IMR-90 (cell line): ENCODE measurements at regions of chr5 and their contacts with region 1.

Region 1: GRCh38 chr5:74640450-74640953 is at the start of gene ENC1:
- DNase-seq: peak; percentile 84
- ATAC-seq: peak; percentile 77
- H3K4me3 ChIP-seq: peak within 1 kb of the TSS; percentile 95
- H3K27ac ChIP-seq: peak within 1 kb of the TSS; percentile 82
- H3K4me1 ChIP-seq: peaks cover 16% of the 10 kb centered on the region
- H3K27me3 ChIP-seq: no peaks in the 10 kb centered on the region
- CTCF ChIP-seq: peak; percentile 53
- POLR2A ChIP-seq: peak; percentile 75
- RAD21 ChIP-seq: peak; percentile 43; the same call in 1 of the 2 replicates
- total RNA-seq, gene ENC1: 55.8 and 70.8 TPM in 2 replicates

Region 2: DNA sequence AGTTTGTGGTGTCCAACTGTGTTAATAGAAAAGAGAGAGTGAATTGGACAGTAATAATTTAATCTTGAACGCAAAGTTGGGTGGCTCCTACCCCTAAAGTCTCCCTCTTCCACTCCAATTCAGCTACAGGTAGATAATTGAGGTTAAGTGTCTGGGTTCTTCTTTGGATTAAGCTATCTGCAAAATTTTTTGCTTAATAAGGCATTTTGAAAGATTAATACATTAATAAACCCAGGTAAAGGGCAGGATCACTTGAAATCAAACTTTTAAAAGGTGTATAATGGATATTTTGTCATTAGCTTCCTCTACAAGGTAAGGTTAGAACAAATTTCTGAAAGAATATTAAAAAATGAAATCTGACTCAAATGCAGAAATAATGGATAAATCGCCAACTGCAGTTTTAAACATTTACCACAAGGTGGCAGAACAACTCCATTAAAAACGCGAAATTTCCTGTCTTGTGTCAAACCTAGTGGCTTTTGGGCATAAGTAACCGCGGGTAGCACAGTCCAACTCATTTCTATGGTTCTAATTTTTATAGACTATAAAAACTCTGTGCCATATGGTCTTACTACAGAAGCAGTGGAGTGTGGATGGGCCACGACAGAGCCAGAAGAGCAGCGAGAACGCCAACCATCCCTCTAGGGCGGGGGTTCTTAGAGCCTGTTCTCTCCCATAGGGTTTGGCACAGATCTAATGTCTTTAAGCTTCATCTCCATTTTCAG is 738.0 kb before region 1 on chr5:
- CTCF ChIA-PET with region 1: interaction called, 12 read pairs
- POLR2A ChIA-PET with region 1: no interaction called
- dilution Hi-C with region 1: no loop called
- in situ Hi-C with region 1: loop called (anchors 5 kb)
- intact Hi-C with region 1: loop called (anchors 1 kb)
- DNase-seq: peak; percentile 77
- ATAC-seq: peak; percentile 63
- H3K4me3 ChIP-seq: no peak overlapping the region
- H3K27ac ChIP-seq: no peak overlapping the region
- H3K4me1 ChIP-seq: peaks cover 4% of the 10 kb centered on the region
- H3K27me3 ChIP-seq: no peaks in the 10 kb centered on the region
- CTCF ChIP-seq: peak; percentile 80
- POLR2A ChIP-seq: no peak
- RAD21 ChIP-seq: peak; percentile 81

Region 3: DNA sequence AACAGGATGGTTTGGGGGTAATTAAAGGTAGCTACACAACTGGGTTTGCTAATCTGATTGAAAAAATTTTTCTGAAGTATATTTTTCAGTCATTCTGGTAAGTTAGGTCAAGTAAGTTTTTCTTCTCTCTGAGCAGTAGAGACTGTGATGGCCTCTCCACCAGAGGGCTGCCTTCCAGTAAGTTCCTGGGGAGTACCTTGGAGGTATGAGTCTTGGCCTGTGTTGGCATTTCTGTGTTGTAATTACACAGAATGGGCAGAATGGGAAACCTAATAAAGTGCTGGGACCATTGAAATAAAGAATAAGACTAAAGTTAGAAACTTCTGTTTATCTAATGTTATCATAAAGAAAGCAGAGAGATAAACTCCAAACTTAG is 583.7 kb before region 1 on chr5:
- CTCF ChIA-PET with region 1: no interaction called
- POLR2A ChIA-PET with region 1: no interaction called
- dilution Hi-C with region 1: no loop called
- in situ Hi-C with region 1: no loop called
- intact Hi-C with region 1: loop called (anchors 5 kb)
- DNase-seq: peak; percentile 33
- ATAC-seq: peak; percentile 48; the same call in 1 of the 2 replicates
- H3K4me3 ChIP-seq: no peak overlapping the region
- H3K27ac ChIP-seq: no peak overlapping the region
- H3K4me1 ChIP-seq: 0 out of 2 replicates have a peak, but pooled peaks cover 2% of the 10 kb centered on the region
- H3K27me3 ChIP-seq: peaks cover 6% of the 10 kb centered on the region
- CTCF ChIP-seq: peak; percentile 33
- POLR2A ChIP-seq: no peak
- RAD21 ChIP-seq: peak; percentile 40

Region 4: DNA sequence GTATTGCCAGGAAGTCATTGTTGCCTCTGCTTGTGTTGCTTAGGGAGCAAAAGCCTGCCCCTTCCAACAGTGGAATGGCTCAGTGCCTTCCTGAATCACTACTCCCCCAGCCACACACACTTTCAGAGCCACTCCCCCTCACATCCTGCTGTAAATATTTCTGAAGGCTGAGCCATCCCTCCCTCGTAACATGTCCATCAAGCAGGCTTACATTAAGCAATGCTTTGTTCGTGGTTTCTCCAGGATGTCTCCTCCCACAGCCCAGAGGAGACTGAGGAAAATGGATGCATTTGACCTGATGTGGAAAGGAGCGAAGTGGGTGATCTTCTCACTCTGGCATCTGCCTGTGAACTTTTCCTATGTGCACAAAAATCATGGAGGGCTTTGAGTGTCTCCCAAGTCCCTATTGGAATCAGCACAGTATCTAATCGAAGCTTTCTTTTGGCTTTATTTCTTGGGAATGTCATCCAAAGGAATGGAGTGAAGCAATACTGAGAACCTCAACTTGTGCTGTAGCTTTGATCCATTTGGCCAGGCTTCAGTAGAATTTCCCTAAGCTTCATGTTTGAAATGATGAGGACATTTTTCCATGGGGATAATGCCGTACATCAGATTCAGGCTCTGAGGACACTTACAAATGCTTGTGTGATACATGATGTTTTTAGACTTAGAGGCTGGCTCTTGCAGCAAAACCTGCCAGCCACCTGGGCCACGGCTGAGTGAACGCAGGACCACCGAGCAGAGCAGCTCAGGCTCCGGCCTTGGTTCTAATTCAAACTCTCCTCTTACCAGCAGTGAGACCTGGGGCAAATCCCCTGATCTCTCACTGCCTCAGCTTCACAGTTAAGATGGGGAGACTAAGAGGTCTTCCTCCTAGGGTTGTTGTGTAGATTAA is 389.1 kb before region 1 on chr5:
- CTCF ChIA-PET with region 1: interaction called, 3 read pairs
- POLR2A ChIA-PET with region 1: no interaction called
- dilution Hi-C with region 1: no loop called
- in situ Hi-C with region 1: no loop called
- intact Hi-C with region 1: loop called (anchors 5 kb)
- DNase-seq: peak; percentile 96
- ATAC-seq: peak; percentile 93
- H3K4me3 ChIP-seq: no peak overlapping the region
- H3K27ac ChIP-seq: peak overlapping the region; percentile 6
- H3K4me1 ChIP-seq: peaks cover 6% of the 10 kb centered on the region
- H3K27me3 ChIP-seq: no peaks in the 10 kb centered on the region
- CTCF ChIP-seq: no peak
- POLR2A ChIP-seq: no peak
- RAD21 ChIP-seq: peak; percentile 10

Region 5: DNA sequence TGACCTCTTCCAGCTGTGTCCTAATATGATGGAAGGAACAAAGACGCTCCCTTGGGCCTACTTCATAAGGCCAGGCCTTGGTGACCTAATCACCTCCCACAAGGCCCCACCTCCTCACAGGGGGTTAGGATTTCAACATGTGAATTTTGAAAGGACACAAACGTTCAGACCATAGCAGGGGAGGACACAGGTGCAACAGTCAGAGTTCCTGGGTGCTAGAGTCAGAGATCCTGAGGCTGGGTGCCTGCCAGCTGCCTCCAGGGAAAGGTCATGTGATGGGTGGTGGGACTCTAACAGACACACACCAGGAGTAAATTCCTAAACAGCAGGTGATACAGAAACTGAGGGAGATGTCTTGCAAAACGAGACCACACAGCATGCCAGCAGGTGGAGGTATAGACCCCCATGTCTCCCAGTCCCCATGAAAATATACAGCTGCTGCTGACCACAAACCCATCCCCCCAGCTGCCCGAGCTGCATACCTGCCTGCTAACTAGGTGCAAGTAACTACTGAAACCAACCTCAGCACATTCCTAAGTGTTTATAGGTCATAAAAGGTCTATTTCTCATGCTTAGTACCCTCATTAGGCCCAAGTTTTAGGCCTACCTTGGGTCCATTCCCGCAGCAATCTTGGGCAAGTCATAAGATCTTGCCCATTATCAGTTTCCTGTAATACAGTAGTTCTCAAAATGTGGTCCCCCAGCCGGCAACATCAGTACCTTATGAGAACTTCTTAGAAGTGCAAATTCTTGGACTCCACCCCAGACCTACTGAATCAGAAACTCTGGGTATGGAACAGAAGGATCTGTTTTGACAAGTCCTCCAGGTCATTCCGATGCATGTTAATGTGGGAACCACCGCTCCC is 245.4 kb before region 1 on chr5:
- CTCF ChIA-PET with region 1: no interaction called
- POLR2A ChIA-PET with region 1: no interaction called
- dilution Hi-C with region 1: no loop called
- in situ Hi-C with region 1: no loop called
- intact Hi-C with region 1: loop called (anchors 5 kb)
- DNase-seq: no peak
- ATAC-seq: no peak
- H3K4me3 ChIP-seq: no peak overlapping the region
- H3K27ac ChIP-seq: no peak overlapping the region
- H3K4me1 ChIP-seq: peaks cover 4% of the 10 kb centered on the region
- H3K27me3 ChIP-seq: peaks cover 4% of the 10 kb centered on the region
- CTCF ChIP-seq: no peak
- POLR2A ChIP-seq: no peak
- RAD21 ChIP-seq: no peak

Region 6: DNA sequence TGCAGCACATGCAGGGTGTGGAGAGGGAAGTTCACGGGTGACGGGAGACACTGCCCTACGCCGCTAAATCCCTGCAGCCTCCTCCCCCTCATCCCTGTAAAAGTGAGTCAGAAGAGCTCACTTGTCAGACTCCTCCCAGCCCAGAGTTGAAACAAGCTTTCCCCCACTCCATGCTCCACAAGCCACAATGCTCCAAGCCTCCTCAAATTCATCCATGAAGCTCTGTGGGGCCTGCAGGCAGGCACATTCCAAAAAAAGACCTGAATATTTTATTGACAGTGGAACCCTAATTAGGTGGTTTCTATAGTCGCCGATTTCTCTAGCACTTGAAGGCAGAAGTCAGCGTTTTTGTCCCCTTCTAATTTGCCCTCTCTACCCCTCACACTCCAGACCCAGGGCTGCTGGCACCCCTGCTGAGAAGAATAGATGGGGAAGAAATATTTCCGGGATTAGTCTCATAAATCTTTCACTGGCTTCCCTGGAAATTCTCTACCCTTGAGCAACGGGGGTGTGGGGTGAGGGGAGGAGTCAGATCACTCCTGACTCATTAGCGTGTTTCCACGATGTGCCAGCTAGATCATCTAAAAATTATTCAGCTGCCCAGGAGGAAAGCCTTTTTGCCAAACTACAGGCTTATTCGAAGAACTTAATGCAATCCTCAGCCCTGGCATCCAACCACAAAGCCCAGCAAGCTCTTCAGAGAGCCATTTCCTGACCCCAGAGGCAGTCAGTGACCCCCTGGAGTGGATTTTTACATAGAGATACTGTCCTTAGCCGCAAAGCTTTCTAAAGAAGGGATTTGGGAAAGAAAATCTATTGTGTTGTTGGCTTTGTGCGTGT is 97.1 kb before region 1 on chr5:
- CTCF ChIA-PET with region 1: interaction called, 3 read pairs
- POLR2A ChIA-PET with region 1: no interaction called
- dilution Hi-C with region 1: no loop called
- in situ Hi-C with region 1: no loop called
- intact Hi-C with region 1: loop called (anchors 2 kb)
- DNase-seq: peak; percentile 80
- ATAC-seq: peak; percentile 83
- H3K4me3 ChIP-seq: no peak overlapping the region
- H3K27ac ChIP-seq: peak overlapping the region; percentile 36
- H3K4me1 ChIP-seq: peaks cover 3% of the 10 kb centered on the region; the same call in 1 of the 2 replicates
- H3K27me3 ChIP-seq: no peaks in the 10 kb centered on the region
- CTCF ChIP-seq: no peak
- POLR2A ChIP-seq: no peak
- RAD21 ChIP-seq: peak; percentile 11; the same call in 1 of the 2 replicates